Left cardiac atrium (tissue), 4 donors: ENCODE measurements at regions of chr10 and their contacts with region 1.

Region 1: DNA sequence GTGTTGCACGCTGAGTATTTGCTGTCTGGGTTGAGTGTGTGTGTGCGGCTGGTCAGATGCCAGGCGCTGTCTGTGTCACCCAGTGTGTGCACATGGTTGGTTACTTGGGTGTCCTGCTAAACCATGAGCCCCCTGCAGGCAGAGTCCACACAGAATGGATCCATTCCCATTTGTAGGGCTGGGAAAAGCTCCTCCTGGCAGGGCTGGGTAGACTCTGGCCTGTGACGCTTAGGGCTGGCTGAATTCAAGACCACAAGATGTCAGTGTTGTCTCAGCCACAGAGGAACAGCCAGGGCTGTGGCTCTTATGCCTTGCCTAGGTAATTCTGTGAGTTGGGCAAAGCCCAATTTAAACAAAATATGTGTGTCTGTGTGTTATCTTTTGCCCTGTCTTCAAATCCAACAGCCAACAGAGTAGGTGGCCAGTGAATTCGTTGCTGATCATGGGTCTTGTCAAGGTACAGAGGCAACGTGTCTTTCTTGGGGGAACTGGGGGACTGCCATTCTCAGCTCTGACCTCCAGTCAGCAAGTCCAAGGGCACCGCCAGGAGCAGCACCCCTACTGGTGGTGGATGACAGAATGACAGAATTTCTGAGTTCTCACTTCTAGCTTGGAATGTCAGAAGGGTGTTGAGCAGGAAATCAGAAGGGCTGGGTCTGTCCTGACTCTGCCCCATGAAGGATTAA is 285.1 kb downstream of the CCSER2 start:
- DNase-seq: no peak
- ATAC-seq: peak; percentile 93 to 94

Region 2: DNA sequence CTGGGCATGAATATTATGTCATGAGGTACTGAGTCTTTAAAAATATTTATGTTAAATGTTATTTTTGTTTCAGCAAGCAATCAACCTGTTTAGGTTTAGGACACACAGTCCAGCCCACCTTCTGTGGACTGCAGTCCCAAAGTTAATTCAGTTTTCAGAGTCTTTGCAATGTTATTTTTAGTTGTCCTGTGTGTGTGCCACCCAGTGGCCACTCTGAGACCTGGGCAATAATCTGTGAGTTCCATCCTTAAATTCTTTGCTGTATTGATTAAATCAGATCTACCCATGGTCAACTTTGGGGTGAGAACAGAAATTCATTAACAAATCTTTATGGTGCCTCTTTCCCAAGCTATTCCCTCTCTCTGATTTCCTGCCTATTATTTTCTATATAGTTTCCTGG is 130.0 kb after region 1 on chr10:
- intact Hi-C with region 1: loop called in 1 of 2 experiments (anchors 5 kb)
- DNase-seq: no peak
- ATAC-seq: no peak

Region 3: GRCh38 chr10:85060944-85061343 is 447.5 kb after region 1 on chr10:
- intact Hi-C with region 1: no loop called
- DNase-seq: peak; percentile 18
- ATAC-seq: peak in 1 of 2 donors; percentile 63